ENCODE measurements at regions of chr4 and their contacts with region 1.

Region 1: DNA sequence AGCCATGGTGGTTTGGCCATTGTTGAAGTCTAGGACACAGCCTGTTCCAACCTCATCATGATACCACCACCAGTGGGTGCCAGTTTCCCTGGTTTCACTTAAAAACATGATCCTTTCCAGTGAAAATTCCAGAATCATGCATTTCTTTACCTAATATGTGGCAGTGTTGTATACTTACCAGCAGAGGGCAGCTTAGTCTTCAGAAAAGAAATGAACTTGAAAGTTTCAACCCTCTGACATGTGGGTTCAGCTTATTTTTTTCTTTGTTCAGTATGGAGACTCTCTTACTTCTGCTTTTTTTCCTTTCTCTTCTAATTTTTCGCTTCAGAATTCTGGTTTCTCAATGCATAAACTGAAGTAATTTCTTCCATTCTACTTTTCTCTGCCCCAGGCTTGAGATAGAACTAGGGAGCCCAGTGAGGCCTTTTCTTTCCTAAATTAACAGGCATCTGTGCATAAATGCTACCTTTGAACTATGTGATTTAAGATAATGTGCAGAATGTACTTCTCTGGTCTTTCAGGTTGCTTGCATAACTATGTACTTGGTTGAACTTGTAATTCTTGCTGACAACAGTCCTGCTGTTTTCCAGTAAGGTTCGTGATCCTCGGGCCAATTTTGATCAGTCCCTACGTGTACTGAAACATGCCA is 10.7 kb downstream of the LIAS start:
- DNase-seq: peak; percentile 41 to 90
- ATAC-seq: peak; percentile 85 to 91; a peak in 5 of 6 replicates
- H3K4me3 ChIP-seq: no peak overlapping the region
- H3K27ac ChIP-seq: peak overlapping the region; percentile 85 to 89
- H3K4me1 ChIP-seq: peaks cover 57% of the 10 kb centered on the region
- CTCF ChIP-seq: peak; percentile 96
- EP300 ChIP-seq: no peak
- POLR2A ChIP-seq: no peak
- RAD21 ChIP-seq: peak; percentile 92 to 95

Region 2: DNA sequence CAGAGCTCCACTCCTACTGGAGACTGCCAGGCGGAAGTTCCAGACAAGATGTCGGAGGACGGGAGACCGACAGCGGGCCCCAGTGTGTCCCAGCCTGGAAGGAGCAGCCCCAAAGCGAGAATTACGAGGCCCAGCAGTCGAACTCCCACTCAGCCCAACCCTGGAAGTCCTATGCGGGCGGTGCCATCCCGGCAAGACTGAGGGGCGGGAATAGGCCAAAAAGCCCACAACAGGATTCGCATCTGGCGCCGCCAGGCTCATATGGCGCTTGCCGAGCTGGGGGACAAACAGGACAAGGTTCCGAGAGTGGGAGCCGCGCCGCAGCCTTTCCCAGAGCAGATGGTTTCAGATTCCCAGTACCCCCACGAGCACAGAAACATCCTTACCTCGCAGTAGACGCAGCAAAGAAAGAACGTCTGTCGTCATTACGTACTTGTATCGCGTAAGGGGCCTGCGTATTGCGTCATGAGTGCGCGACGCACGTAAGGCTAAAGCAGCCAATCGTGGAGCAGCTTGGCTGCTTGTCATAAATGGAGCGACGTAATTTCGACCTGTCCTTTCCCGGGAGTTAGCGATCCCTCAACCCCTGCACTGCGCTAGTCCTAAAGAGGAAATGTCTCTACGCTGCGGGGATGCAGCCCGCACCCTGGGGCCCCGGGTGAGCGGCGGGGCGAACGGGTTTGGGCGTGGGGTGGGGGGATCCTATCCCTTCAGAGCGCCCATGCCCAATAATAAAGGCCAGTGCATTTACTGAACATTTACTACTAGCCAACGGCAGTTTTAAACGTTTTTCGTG is 10.8 kb before region 1 on chr4 and contains the starts of genes LIAS and RPL9:
- CTCF ChIA-PET with region 1: interaction called, 10 read pairs
- POLR2A ChIA-PET with region 1: interaction called, 7 read pairs
- DNase-seq: peak; percentile 95 to 99
- ATAC-seq: peak; percentile 95 to 96
- H3K4me3 ChIP-seq: peak within 1 kb of the TSS; percentile 82
- H3K27ac ChIP-seq: peak within 1 kb of the TSS; percentile 93 to 94
- H3K4me1 ChIP-seq: peaks cover 33% of the 10 kb centered on the region
- CTCF ChIP-seq: no peak
- EP300 ChIP-seq: no peak
- POLR2A ChIP-seq: peak; percentile 78
- RAD21 ChIP-seq: no peak
- polyA plus RNA-seq, gene LIAS: 16.0 and 22.3 TPM in 2 replicates
- polyA plus RNA-seq, gene RPL9: 897 and 1,263 TPM in 2 replicates

Region 3: DNA sequence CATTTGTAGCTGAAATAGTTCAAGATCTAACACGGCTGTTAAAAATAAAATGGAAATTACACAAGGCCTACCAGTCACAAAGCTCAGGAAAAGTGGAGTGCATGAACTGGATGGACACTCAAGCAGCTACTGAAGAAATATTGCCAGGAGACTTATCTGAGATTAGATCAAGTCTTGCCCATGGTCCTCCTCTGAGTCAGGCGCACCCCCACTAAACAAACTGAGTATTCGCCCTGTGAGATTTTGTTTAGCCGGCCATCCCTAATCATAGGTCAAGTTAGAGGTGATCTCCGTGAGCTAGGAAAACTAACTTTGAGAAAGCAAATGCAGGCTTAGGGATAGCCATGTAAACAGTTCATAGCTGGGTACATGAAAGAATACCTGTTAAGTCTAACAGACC is 19.1 kb after region 1 on chr4:
- CTCF ChIA-PET with region 1: interaction called, 10 read pairs
- POLR2A ChIA-PET with region 1: no interaction called
- DNase-seq: no peak
- ATAC-seq: no peak
- H3K4me3 ChIP-seq: no peak overlapping the region
- H3K27ac ChIP-seq: no peak overlapping the region
- H3K4me1 ChIP-seq: no peaks in the 10 kb centered on the region
- CTCF ChIP-seq: no peak
- EP300 ChIP-seq: no peak
- POLR2A ChIP-seq: no peak
- RAD21 ChIP-seq: no peak

Region 4: DNA sequence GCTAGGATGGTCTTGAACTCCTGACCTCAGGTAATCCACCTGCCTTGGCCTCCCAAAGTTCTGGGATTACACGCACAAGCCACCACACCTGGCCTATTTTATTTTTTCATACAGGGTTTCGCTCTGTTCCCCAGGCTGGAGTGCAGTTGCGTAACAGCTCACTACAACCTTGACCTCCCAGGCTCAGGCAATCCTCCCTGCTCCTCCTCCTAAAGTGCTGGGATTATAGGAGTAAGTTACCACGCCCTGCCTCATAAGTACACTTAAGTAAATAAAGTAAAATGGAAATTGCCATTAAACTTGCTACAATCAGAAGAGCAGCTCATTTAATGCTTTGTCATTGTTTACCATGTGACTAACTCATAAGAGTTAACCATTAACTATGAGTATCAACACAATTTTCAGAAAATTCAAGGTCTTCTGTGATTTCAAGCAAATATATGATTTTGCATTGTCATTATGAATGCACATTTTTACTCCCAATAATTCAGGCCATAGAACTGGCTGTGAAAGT is 45.4 kb after region 1 on chr4:
- CTCF ChIA-PET with region 1: interaction called, 26 read pairs
- POLR2A ChIA-PET with region 1: no interaction called
- DNase-seq: peak; percentile 57 to 96
- ATAC-seq: peak; percentile 81 to 93
- H3K4me3 ChIP-seq: peak overlapping the region; percentile 6; the same call in 1 of the 3 replicates
- H3K27ac ChIP-seq: peak overlapping the region; percentile 98 to 99
- H3K4me1 ChIP-seq: peaks cover 87% of the 10 kb centered on the region
- CTCF ChIP-seq: no peak
- EP300 ChIP-seq: peak; percentile 89 to 92
- POLR2A ChIP-seq: no peak
- RAD21 ChIP-seq: peak; percentile 8 to 36; a peak in 3 of 5 replicates

Region 5: GRCh38 chr4:39591290-39591689 is 121.7 kb after region 1 on chr4:
- CTCF ChIA-PET with region 1: interaction called, 18 read pairs
- POLR2A ChIA-PET with region 1: no interaction called
- DNase-seq: peak; percentile 27 to 64
- ATAC-seq: peak; percentile 47 to 73; a peak in 5 of 6 replicates
- H3K4me3 ChIP-seq: no peak overlapping the region
- H3K27ac ChIP-seq: peak overlapping the region; percentile 60 to 76; a peak in 5 of 6 replicates
- H3K4me1 ChIP-seq: peaks cover 18% of the 10 kb centered on the region
- CTCF ChIP-seq: peak; percentile 39; the same call in 2 of the 3 replicates
- EP300 ChIP-seq: no peak
- POLR2A ChIP-seq: no peak
- RAD21 ChIP-seq: peak; percentile 64 to 68

Region 6: DNA sequence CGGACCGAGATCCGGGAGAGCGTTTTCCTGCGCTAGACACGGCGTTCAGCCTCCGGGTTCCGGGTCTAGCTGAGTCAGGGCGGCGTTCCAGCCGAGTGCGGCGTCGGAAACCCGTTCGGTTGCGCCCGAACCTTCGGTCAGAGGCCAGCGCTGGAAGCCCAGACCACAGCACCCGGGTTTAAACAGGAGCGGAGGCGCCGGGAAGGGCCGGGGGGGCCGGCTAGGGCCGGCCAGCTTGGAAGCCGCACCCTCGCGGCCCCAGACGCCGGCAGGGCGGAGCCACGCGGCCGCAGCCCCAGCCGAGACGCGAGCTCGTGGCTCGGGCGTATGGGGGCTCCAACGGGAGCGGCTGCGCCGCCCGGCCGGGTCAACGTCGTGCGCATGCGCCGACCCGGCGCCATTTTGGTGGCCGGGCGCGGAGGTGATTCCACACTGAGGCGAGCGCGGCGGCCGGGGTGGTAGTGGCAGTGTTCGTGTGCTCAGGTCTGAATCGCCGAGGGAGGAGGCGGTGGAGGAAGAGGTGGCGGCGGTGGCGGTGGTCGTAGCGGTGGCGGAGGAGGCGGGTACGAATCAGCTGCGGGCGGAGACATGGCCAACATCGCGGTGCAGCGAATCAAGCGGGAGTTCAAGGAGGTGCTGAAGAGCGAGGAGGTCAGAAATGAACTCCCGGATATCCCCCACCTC is 228.3 kb after region 1 on chr4 and contains the start of gene UBE2K:
- CTCF ChIA-PET with region 1: interaction called, 8 read pairs
- POLR2A ChIA-PET with region 1: interaction called, 12 read pairs
- DNase-seq: peak; percentile 70 to 81
- ATAC-seq: peak; percentile 97 to 98
- H3K4me3 ChIP-seq: peak within 1 kb of the TSS; percentile 70
- H3K27ac ChIP-seq: peak within 1 kb of the TSS; percentile 90 to 97
- H3K4me1 ChIP-seq: 0 out of 3 replicates have a peak, but pooled peaks cover 12% of the 10 kb centered on the region
- CTCF ChIP-seq: no peak
- EP300 ChIP-seq: no peak
- POLR2A ChIP-seq: peak; percentile 79
- RAD21 ChIP-seq: no peak
- polyA plus RNA-seq, gene UBE2K: 116 and 130 TPM in 2 replicates